Activated T-helper 2 cell treated with anti-CD3 and anti-CD28 coated beads, Interferon-gamma antibody, Interleukin-2, Interleukin-4, amounts not matched to agents 10 μg/mL and 5 μg/mL and 100 μg/mL, durations not matched to agents 14 hours and 24 hours and 36 hours (primary cell): ENCODE measurements at regions of chr4 and their contacts with region 1.

Region 1: GRCh38 chr4:164779811-164780216 is 25.9 kb downstream of the SMIM31 start:
- DNase-seq: no peak
- H3K4me3 Mint-ChIP-seq: no peak overlapping the region
- H3K27ac Mint-ChIP-seq: no peak overlapping the region
- H3K4me1 Mint-ChIP-seq: no peaks in the 10 kb centered on the region
- H3K27me3 Mint-ChIP-seq: no peaks in the 10 kb centered on the region

Region 2: DNA sequence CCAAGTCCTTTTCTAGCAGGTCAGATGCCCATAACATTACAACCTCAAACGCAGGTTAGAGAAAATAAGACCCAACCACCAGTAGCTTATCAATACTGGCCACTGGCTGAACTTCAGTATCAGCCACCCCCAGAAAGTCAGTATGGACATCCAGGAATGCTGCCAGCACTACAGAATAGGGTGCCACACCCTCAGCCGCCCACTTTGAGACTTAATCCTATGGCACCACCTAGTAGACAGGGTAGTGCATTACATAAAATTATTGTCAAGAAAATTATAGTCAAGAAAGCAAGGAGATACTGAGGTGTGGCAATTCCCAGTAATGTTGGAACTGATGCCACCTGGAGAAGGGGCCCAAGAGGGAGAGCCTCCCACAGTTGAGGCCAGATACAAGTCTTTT is 217.5 kb after region 1 on chr4:
- intact Hi-C with region 1: loop called (anchors 5 kb)
- DNase-seq: no peak
- H3K4me3 Mint-ChIP-seq: no peak overlapping the region
- H3K27ac Mint-ChIP-seq: no peak overlapping the region
- H3K4me1 Mint-ChIP-seq: no peaks in the 10 kb centered on the region
- H3K27me3 Mint-ChIP-seq: peaks cover 12% of the 10 kb centered on the region

Region 3: DNA sequence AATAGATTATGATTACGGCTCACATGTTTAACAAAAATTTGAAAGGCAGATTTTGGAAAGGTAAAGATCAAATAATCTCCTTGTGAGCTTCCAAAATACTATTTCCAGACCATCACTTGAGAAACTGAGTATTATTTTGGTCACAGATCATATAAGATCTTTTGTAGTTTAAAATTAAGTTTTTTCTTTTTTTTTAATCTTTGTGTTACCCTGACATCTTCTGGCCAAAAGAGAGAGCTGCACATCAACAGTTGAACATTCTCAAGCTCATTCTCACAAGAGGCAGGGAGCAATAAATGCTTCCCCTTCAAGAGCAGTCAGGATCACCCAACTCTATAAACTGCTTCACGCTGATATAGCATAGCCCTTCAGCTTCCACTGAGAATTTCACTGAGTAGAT is 317.0 kb after region 1 on chr4:
- intact Hi-C with region 1: loop called (anchors 1 kb)
- DNase-seq: no peak
- H3K4me3 Mint-ChIP-seq: no peak overlapping the region
- H3K27ac Mint-ChIP-seq: no peak overlapping the region
- H3K4me1 Mint-ChIP-seq: no peaks in the 10 kb centered on the region
- H3K27me3 Mint-ChIP-seq: no peaks in the 10 kb centered on the region